ENCODE measurements at regions of chr4 and their contacts with region 1.

Region 1: DNA sequence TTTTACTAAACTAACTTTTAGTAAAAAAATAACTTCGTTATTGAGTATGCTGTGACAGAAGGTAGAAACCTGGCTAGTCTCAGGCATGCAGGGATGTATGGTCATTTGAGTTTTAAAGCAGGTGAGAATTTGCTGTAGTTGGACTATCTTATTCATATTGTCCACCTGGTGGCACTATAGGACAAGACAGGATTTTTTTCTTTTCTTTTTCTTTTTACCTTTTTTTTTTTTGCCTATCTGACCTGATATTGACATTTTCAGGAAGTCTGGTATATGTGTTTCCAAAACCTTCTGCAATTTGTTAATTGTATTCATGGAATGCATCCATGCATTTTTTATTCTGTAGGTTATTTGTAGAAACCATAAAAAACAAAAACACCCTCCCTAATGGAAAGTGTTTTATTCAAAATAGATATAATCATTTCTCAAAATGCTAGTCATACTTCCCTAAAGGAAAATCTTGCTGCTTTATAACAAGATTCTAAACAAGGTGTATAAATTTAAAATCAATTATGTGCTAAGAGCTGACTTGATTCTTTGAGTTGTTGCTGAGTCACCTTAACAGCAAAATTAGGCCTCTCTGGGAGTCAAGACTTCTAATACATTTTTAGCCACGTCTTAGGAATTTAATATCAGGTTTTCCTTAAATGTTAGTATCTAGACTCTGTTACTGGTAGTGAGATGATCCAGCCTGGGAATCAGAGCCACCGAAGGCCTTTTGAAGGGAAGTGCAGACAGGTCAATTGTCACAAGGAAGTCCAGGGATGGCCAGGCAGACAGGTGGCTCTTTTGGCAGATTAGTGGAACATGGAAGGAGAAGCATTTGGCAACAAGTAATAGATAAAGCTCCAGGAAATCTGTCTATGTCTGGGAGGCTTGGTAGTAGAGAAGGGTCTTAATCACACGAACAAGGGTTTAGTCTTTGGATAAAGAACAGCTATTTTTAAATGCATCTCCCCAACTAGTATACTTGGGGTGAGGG is 201.3 kb upstream of the GNPDA2 start:
- DNase-seq: no peak
- H3K4me3 ChIP-seq: no peak overlapping the region
- H3K27ac ChIP-seq: no peak overlapping the region
- H3K4me1 ChIP-seq: peaks cover 0 to 9% (median 1%) of the 10 kb centered on the region in 4 donors
- H3K27me3 ChIP-seq: no peaks in the 10 kb centered on the region
- CTCF ChIP-seq: peak; percentile 19 to 69 (median 52)
- EP300 ChIP-seq: no peak
- POLR2A ChIP-seq: no peak

Region 2: GRCh38 chr4:45082101-45082500 is 154.4 kb after region 1 on chr4:
- intact Hi-C with region 1: no loop called
- DNase-seq: no peak
- H3K4me3 ChIP-seq: no peak overlapping the region
- H3K27ac ChIP-seq: no peak overlapping the region
- H3K4me1 ChIP-seq: no peaks in the 10 kb centered on the region
- H3K27me3 ChIP-seq: no peaks in the 10 kb centered on the region
- CTCF ChIP-seq: no peak
- EP300 ChIP-seq: no peak
- POLR2A ChIP-seq: no peak

Region 3: GRCh38 chr4:45453258-45453853 is 525.7 kb after region 1 on chr4:
- intact Hi-C with region 1: loop called (anchors 5 kb)
- DNase-seq: no peak
- H3K4me3 ChIP-seq: no peak overlapping the region
- H3K27ac ChIP-seq: no peak overlapping the region
- H3K4me1 ChIP-seq: no peaks in the 10 kb centered on the region
- H3K27me3 ChIP-seq: no peaks in the 10 kb centered on the region
- CTCF ChIP-seq: peak; percentile 28 to 65 (median 44)
- EP300 ChIP-seq: no peak
- POLR2A ChIP-seq: no peak